Common myeloid progenitor, CD34-positive (primary cell): ENCODE measurements at regions of chr11 and their contacts with region 1.

Region 1: GRCh38 chr11:21511835-21512440 is 680.9 kb upstream of the ANO5 start:
- DNase-seq: peak; percentile 70 to 86 (median 81)
- H3K4me3 ChIP-seq: no peak overlapping the region
- H3K27ac ChIP-seq: no peak overlapping the region
- H3K4me1 ChIP-seq: no peaks in the 10 kb centered on the region
- H3K27me3 ChIP-seq: no peaks in the 10 kb centered on the region

Region 2: GRCh38 chr11:21142007-21142406 is 369.9 kb before region 1 on chr11:
- CTCF ChIA-PET with region 1: interaction called, 17 read pairs
- POLR2A ChIA-PET with region 1: no interaction called
- DNase-seq: peak; percentile 10 to 22 (median 17)
- H3K4me3 ChIP-seq: no peak overlapping the region
- H3K27ac ChIP-seq: no peak overlapping the region
- H3K4me1 ChIP-seq: no peaks in the 10 kb centered on the region
- H3K27me3 ChIP-seq: no peaks in the 10 kb centered on the region

Region 3: DNA sequence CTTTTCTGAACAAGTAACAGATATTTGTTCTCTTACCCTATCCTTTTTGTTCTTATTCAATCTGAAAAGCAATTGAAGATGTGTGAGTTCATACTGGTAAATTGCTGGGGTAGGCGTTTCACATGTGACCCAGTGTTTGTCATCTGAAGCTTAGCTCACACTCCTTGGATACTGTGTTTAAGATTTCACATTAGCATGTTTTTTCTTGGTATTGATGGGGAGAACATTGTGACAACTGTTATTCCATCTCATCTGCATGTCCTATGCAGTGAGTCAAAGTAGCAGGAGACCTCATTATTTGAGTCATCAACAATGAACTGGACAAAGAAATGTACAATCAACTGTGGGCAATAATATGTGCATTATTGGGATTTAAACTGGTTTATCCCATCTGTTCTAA is 10.7 kb before region 1 on chr11:
- CTCF ChIA-PET with region 1: interaction called, 23 read pairs
- POLR2A ChIA-PET with region 1: interaction called, 5 read pairs
- DNase-seq: no peak
- H3K4me3 ChIP-seq: no peak overlapping the region
- H3K27ac ChIP-seq: no peak overlapping the region
- H3K4me1 ChIP-seq: no peaks in the 10 kb centered on the region
- H3K27me3 ChIP-seq: no peaks in the 10 kb centered on the region